RWPE1 (cell line): ENCODE measurements at regions of chr20 and their contacts with region 1.

Region 1: GRCh38 chr20:47501483-47502270 is at the start of gene NCOA3:
- DNase-seq: peak; percentile 99
- H3K27ac ChIP-seq: peak within 1 kb of the TSS; percentile 91
- CTCF ChIP-seq: no peak; the same call in none of the 2 replicates

Region 2: GRCh38 chr20:47392015-47392720 is 109.5 kb before region 1 on chr20:
- CTCF ChIA-PET with region 1: interaction called, 13 read pairs
- POLR2A ChIA-PET with region 1: interaction called, 4 read pairs
- DNase-seq: peak; percentile 95
- H3K27ac ChIP-seq: peak overlapping the region; percentile 87
- CTCF ChIP-seq: no peak

Region 3: DNA sequence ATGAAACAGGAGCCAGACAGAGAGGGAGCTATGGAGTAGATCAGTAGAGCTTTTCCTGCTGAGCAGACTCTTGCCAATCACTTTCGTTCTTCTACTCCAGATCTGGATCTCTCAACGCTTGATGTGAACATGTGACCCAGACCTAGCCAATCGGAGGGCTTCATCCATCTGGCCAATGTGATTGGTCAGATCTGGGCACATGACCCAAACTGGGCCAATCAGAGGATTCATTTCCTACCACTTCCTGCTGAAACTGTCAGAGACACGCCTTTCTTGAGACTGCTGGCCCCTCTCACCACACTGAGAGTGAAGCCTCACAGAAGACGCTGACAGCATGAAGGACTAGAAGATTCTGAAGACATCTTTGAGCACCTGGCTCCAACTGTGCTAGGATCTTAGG is 101.0 kb before region 1 on chr20:
- CTCF ChIA-PET with region 1: interaction called, 13 read pairs
- POLR2A ChIA-PET with region 1: interaction called, 16 read pairs
- DNase-seq: peak; percentile 62
- H3K27ac ChIP-seq: no peak overlapping the region
- CTCF ChIP-seq: no peak

Region 4: GRCh38 chr20:47546184-47547033 is 44.7 kb after region 1 on chr20:
- CTCF ChIA-PET with region 1: no interaction called
- POLR2A ChIA-PET with region 1: no interaction called
- DNase-seq: peak; percentile 70
- H3K27ac ChIP-seq: peak overlapping the region; percentile 23; the same call in 1 of the 2 replicates
- CTCF ChIP-seq: no peak

Region 5: GRCh38 chr20:47620808-47621805 is 119.4 kb after region 1 on chr20:
- CTCF ChIA-PET with region 1: interaction called, 7 read pairs
- POLR2A ChIA-PET with region 1: interaction called, 14 read pairs
- DNase-seq: peak; percentile 64
- H3K27ac ChIP-seq: no peak overlapping the region
- CTCF ChIP-seq: peak; percentile 99

Region 6: DNA sequence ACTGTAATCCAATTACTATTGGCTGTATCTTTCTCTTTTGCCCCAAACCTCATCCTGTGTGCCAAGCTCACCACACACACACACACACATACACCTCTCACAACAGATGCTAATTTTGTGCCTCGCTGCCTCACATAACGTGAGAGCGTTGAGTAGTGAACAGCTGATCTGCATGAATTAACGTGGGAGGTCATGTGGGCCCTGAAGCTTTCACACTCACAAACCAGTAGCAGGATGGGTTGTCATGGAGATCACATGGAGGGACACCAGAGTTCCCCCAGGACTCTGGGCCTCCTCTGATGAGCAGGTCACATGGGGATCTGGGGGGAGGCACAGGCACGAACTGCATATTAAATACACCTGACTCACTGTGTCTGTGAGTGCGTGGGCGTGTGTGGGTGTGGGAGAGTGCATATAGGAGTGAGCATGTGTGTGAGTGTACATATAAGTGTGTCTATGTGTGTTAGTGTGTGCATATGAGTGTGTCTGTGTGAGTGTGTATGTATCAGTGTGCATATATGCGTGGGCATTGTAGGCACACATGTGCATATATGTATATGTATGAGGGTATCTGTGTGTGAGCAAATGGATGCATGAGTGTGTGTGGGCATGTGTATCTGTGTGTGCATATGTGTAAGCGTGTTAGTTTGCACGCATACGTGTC is 346.3 kb after region 1 on chr20:
- CTCF ChIA-PET with region 1: no interaction called
- POLR2A ChIA-PET with region 1: no interaction called
- DNase-seq: no peak
- H3K27ac ChIP-seq: peak overlapping the region; percentile 100
- CTCF ChIP-seq: no peak